Activated CD4-positive, alpha-beta memory T cell treated with anti-CD3 and anti-CD28 coated beads for 36 hours (primary cell): ENCODE measurements at regions of chr1 and their contacts with region 1.

Region 1: GRCh38 chr1:66182551-66183178 is 351.3 kb upstream of the SGIP1 start:
- DNase-seq: peak; percentile 66
- H3K4me3 Mint-ChIP-seq: no peak overlapping the region
- H3K27ac Mint-ChIP-seq: no peak overlapping the region
- H3K4me1 Mint-ChIP-seq: peaks cover 23% of the 10 kb centered on the region
- H3K27me3 Mint-ChIP-seq: peaks cover 7% of the 10 kb centered on the region

Region 2: DNA sequence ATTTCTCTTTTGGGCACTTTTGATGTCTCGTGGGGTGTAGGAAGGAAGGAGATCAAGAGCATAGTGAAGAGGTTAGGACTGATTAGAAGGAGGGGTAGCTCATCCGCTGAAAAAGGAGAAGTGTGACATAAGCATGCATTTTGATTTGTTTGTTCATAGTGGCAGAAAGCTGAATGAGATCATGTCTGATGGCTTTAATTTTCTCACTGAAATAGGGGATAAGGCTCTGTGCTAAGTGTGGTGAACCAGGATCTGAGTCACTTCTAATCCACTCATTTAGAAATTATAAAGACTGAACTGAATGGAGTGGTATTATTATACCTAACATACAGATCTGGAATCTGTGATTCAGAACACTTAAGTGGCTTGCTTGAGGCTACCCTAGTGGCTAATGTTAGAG is 45.4 kb before region 1 on chr1:
- CTCF ChIA-PET with region 1: no interaction called
- POLR2A ChIA-PET with region 1: no interaction called
- intact Hi-C with region 1: loop called (anchors 5 kb)
- DNase-seq: no peak
- H3K4me3 Mint-ChIP-seq: no peak overlapping the region
- H3K27ac Mint-ChIP-seq: no peak overlapping the region
- H3K4me1 Mint-ChIP-seq: peaks cover 6% of the 10 kb centered on the region
- H3K27me3 Mint-ChIP-seq: peaks cover 3% of the 10 kb centered on the region

Region 3: GRCh38 chr1:66154394-66154793 is 28.3 kb before region 1 on chr1:
- CTCF ChIA-PET with region 1: no interaction called
- POLR2A ChIA-PET with region 1: no interaction called
- intact Hi-C with region 1: no loop called
- DNase-seq: no peak
- H3K4me3 Mint-ChIP-seq: no peak overlapping the region
- H3K27ac Mint-ChIP-seq: no peak overlapping the region
- H3K4me1 Mint-ChIP-seq: no peaks in the 10 kb centered on the region
- H3K27me3 Mint-ChIP-seq: peaks cover 12% of the 10 kb centered on the region

Region 4: DNA sequence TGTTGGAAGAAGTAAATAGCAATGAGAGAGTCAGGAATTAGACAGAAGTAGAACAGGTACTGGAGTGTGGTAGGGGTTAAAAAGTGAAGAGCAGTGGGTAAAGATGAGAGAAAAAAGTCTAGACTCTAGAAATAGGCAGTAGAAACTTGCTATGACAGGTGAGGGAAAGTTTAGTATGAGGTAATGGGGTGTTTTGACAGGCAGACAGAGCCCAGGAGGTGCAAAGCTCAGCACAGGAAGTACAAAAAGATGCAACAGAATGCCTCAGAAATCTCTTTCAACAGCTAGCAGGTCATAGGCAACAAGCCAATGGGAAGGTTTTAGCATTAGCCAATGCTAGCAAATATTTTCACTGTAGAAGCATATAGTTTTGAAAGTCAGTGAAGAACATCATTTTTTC is 32.2 kb after region 1 on chr1:
- CTCF ChIA-PET with region 1: no interaction called
- POLR2A ChIA-PET with region 1: no interaction called
- intact Hi-C with region 1: loop called (anchors 2 kb)
- DNase-seq: peak; percentile 33
- H3K4me3 Mint-ChIP-seq: no peak overlapping the region
- H3K27ac Mint-ChIP-seq: no peak overlapping the region
- H3K4me1 Mint-ChIP-seq: peaks cover 10% of the 10 kb centered on the region
- H3K27me3 Mint-ChIP-seq: no peaks in the 10 kb centered on the region